Heart right ventricle (tissue), 16 donors: ENCODE measurements at regions of chrX and their contacts with region 1.

Region 1: DNA sequence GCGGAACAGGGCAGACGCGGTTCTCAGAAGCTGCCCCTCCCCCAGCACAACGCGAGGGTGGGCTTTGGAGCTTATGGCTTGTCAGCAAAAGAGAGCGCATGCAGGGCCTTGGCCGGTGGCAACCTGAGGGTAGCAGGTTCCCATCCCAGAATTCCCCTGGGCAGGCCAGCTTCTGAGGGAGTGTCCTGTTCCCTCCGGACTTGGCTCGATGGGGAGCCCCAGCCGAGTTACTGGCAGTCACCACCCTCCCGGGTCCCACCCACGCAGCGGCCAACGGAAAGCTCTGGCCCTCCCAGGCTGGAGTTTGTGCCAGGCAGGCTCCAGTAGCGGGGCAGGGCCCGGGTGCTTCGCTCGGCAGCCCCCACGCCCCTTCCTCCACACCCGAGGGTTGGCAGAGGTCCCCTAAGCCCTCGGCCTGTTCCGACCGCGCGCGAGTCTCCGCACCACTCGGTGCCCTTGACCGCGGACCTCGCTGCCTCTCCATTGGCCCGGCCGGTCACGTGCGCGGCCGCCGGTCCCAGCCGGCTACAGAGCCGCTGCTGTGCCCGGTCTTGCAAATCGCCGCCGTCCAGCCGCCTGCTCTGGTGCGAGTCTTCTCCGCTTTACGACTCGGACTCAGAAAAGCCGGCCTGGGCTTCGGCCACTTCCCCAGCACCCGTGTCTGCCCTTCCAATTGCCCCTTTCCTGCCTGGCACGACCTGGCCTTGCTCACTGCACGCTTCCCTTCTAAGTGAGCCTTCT is 20.9 kb upstream of the MTM1 start:
- DNase-seq: peak; percentile 57 to 75
- ATAC-seq: peak; percentile 85 to 93 (median 90)
- H3K4me3 ChIP-seq: peak overlapping the region in 9 of 10 donors; percentile 9 to 55 (median 42)
- H3K27ac ChIP-seq: peak overlapping the region; percentile 66 to 88 (median 76)
- H3K4me1 ChIP-seq: peaks cover 0 to 43% (median 11%) of the 10 kb centered on the region in 9 donors
- H3K27me3 ChIP-seq: peaks cover 0 to 4% (median 0%) of the 10 kb centered on the region in 7 donors
- CTCF ChIP-seq: no peak

Region 2: DNA sequence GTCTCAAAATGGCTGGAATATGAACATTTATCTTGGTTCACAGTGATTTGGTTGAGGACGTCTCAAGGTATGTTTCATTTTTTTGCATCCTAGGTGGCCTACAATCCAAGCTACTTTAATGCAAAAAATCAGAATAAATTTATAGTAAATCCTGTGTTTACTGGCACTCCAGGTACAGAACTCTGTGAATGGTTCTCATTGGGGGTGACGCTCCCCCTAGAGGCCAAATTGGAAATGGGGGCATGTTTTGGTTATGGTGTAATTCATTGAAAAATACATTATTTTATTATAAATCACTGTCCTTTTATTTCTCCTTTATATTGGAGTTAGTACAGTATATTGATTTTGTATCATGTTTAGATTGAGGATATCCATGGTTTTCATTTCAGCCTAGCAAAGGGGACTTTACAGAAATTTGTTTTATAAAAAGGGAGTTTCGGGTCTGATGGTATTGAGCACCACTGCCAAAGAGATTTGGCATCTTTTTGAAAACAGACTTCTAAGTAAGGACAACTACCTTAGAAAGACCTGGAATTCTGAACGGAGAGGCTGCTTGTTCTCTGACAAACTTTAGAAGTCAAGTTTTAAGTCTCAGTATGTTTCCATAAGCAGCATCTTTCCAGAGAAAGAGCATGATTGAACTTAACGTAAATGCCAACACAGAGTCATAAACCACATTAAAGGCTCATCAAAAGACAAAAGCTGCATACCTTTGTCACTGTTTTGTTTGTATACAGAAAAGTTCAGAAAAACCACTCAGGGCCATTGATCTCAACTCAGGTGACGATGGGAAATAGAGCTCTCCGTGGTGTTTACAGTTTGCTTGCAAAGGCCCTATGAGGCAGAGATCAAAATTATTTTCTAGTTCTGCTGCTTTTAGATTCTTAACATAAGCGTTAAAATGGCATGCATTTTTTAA is 40.3 kb after region 1 on chrX:
- intact Hi-C with region 1: loop called in 1 of 10 experiments (anchors 5 kb)
- DNase-seq: no peak
- ATAC-seq: no peak
- H3K4me3 ChIP-seq: no peak overlapping the region
- H3K27ac ChIP-seq: no peak overlapping the region
- H3K4me1 ChIP-seq: no peaks in the 10 kb centered on the region
- H3K27me3 ChIP-seq: peaks cover 0 to 4% (median 0%) of the 10 kb centered on the region in 7 donors
- CTCF ChIP-seq: peak; percentile 40 to 70 (median 60)

Region 3: DNA sequence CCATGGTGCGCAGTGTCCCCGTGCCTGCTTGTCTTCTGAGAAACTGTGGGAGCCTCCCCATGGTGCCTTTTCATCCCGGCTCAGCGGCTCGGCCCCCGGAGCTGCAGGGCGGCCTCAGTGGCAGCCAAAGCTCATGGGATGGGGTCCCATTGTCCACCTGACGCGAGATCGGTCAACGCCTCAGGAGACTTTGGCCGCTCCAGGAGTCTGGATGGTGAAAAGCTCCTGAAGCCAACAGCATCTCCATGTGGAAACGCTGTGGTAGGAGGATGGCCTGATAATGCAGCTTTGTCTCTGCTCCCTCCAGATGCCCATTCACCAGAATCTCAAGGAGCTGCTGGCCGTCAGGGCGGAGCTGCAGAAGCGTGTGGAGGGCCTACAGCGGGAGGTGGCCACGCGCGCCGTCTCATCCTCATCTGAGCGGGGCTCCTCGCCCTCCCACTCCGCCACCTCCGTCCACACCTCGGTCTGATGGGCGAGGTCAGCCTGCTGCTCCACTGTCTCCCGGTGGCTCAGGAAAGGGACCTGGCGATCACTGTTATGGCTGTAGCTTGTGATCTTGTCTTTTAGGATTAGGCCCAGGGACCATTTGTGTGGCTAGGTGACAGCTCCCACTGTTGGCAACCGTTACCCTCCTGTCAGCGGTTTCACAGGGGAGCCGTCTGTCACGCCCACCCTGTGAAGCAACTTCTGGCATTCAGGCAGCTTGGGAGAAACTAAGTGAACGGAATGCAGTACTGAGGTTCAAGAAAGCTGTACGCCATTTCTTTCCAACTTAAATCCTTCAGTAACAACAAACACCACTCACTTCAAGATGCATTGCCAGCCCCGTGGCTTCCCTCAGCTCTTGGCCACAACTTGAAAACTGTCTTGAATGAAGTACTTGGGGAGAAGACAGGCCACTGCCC is 215.0 kb after region 1 on chrX:
- intact Hi-C with region 1: no loop called
- DNase-seq: no peak
- ATAC-seq: peak in 1 of 8 donors; percentile 5
- H3K4me3 ChIP-seq: no peak overlapping the region
- H3K27ac ChIP-seq: no peak overlapping the region
- H3K4me1 ChIP-seq: peaks cover 0 to 11% (median 6%) of the 10 kb centered on the region in 9 donors
- H3K27me3 ChIP-seq: no peaks in the 10 kb centered on the region
- CTCF ChIP-seq: no peak